SK-N-SH (cell line): ENCODE measurements at regions of chr13 and their contacts with region 1.

Region 1: DNA sequence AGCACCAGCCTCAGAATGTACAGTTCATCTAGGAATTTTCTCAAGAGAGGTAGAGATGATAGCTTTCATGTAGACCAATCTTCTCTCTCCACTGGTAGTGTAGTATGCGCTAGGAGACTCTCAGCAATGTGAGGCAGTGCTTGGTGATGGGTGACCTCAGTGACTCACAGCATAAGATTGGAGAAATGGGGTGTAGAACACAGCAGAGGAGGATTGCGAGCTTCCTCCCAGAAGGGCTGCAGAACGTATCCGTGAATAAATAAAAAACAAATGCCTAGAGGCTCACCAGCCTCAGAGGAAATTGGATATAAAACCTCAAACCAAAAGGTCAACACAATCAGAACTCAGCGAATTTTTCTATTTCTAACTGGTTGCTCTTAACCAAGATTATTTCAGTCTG is 182.9 kb upstream of the RXFP2 start:
- DNase-seq: no peak
- H3K4me3 ChIP-seq: no peak overlapping the region
- H3K27ac ChIP-seq: no peak overlapping the region; a peak in 1 of 4 replicates
- H3K4me1 ChIP-seq: 0 out of 4 replicates have a peak, but pooled peaks cover 0 to 2% of the 10 kb centered on the region in 2 experiments
- H3K27me3 ChIP-seq: no peaks in the 10 kb centered on the region
- CTCF ChIP-seq: no peak
- EP300 ChIP-seq: no peak
- RAD21 ChIP-seq: no peak

Region 2: DNA sequence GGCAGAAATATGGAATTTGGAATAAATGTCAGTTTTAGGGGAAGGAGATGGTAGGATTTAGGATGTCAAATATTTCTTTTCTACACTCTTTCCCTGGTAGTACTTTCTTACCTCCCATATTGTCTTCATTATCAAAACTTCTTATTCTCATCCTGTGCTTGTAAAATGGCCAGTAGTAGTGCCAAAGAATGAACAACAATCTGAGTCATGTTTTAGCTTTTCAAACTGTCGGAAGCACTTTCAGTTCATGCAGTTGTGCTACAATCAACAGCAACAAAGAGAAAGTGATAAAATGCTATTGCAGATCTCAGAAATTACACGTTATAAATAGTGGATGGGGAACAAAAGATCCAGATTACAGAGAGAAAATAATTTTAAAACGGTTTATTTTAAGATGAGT is 10.8 kb before region 1 on chr13:
- CTCF ChIA-PET with region 1: interaction called, 10 read pairs
- POLR2A ChIA-PET with region 1: no interaction called
- DNase-seq: no peak
- H3K4me3 ChIP-seq: peak overlapping the region in 1 of 2 experiments; percentile 2; a peak in 1 of 4 replicates
- H3K27ac ChIP-seq: peak overlapping the region in 1 of 2 experiments; percentile 72; a peak in 2 of 4 replicates
- H3K4me1 ChIP-seq: peaks cover 0 to 6% of the 10 kb centered on the region in 2 experiments; a peak in 1 of 4 replicates
- H3K27me3 ChIP-seq: no peaks in the 10 kb centered on the region
- CTCF ChIP-seq: no peak
- EP300 ChIP-seq: no peak
- RAD21 ChIP-seq: no peak